Left cardiac atrium (tissue), 4 donors: ENCODE measurements at regions of chr6 and their contacts with region 1.

Region 1: GRCh38 chr6:124870611-124871459 is 91.4 kb upstream of the RNF217 start:
- DNase-seq: no peak
- ATAC-seq: no peak

Region 2: GRCh38 chr6:125114248-125114858 is 243.5 kb after region 1 on chr6:
- intact Hi-C with region 1: loop called (anchors 1 to 2 kb)
- DNase-seq: peak; percentile 30
- ATAC-seq: no peak